ENCODE measurements at regions of chr22 and their contacts with region 1.

Region 1: GRCh38 chr22:24230911-24231656 is 13.8 kb downstream of the GGT5 start:
- DNase-seq: peak in 4 of 7 donors; percentile 36 to 61 (median 43)
- H3K4me3 ChIP-seq: no peak overlapping the region
- H3K27ac ChIP-seq: no peak overlapping the region
- H3K4me1 ChIP-seq: no peaks in the 10 kb centered on the region
- H3K27me3 ChIP-seq: no peaks in the 10 kb centered on the region
- CTCF ChIP-seq: peak in 3 of 6 experiments; percentile 18 to 34 (median 21)
- POLR2A ChIP-seq: no peak

Region 2: DNA sequence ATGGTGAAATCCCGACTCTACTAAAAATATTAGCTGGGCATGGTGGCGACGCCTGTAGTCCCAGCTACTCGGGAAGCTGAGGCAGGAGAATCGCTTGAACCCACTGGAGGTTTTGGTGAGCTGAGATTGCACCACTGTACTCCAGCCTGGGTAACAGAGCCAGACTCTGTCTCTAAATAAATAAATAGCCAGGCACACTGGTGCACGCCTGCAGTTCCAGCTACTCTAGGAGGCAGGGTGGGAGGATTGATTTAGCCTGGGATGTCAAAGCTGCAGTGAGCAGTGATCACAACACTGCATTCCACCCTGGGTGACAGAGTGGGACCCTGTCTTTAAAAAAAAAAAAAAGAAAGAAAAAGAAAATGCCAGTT is 32.4 kb before region 1 on chr22:
- intact Hi-C with region 1: loop called in 1 of 2 experiments (anchors 5 kb)
- DNase-seq: no peak
- H3K4me3 ChIP-seq: no peak overlapping the region
- H3K27ac ChIP-seq: peak overlapping the region in 1 of 5 donors; percentile 10
- H3K4me1 ChIP-seq: peaks cover 4 to 9% of the 10 kb centered on the region in 2 donors
- H3K27me3 ChIP-seq: no peaks in the 10 kb centered on the region
- CTCF ChIP-seq: no peak
- POLR2A ChIP-seq: no peak

Measured in adrenal gland (tissue), 19 donors.